HEK293 (cell line): ENCODE measurements at regions of chr22 and their contacts with region 1.

Region 1: GRCh38 chr22:22959147-22959827 is 71.7 kb downstream of the IGLL5 start:
- H3K4me3 ChIP-seq: no peak overlapping the region
- H3K27ac ChIP-seq: no peak overlapping the region
- H3K4me1 ChIP-seq: no peaks in the 10 kb centered on the region
- CTCF ChIP-seq: peak; percentile 98

Region 2: GRCh38 chr22:22463855-22464540 is 495.3 kb before region 1 on chr22:
- CTCF ChIA-PET with region 1: interaction called, 77 read pairs
- POLR2A ChIA-PET with region 1: no interaction called
- H3K4me3 ChIP-seq: no peak overlapping the region
- H3K27ac ChIP-seq: no peak overlapping the region
- H3K4me1 ChIP-seq: no peaks in the 10 kb centered on the region
- CTCF ChIP-seq: peak; percentile 77

Region 3: DNA sequence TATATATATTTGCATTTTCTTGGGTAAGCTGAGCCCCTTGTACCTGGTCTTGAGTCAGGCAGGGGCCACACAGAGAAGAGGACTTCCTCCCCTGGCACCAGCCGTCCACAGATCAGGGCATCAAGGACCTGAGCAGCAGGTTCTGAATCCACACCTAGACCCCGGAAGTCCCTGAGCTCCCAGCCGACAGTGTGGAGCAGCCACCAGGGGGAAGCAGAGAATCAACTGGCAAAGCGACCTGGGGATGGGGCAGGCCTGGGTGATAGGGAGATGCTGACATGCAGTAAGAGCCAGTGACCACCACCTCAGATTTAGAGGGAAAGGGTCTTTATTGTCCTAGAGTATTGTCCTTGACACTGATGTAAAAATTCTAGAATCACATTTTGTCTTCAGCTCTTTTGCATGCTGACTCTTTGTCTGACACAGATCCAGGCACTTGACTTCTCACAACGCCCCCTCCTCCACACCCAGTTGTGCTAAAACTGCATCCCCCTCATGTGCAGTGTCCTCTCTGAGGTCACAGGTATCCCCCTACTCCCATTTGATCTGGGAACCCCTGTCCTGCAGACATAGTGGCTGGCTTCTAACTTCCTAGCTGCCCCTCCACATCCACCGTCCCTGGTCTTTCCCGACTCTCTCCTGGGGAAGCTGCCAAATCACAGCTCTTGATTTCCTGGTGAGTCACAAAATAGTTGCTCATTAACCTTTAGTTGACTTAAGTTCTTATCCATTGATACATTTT is 205.6 kb before region 1 on chr22:
- CTCF ChIA-PET with region 1: interaction called, 18 read pairs
- POLR2A ChIA-PET with region 1: no interaction called
- H3K4me3 ChIP-seq: no peak overlapping the region
- H3K27ac ChIP-seq: no peak overlapping the region
- H3K4me1 ChIP-seq: no peaks in the 10 kb centered on the region
- CTCF ChIP-seq: peak; percentile 57; the same call in 1 of the 2 replicates

Region 4: GRCh38 chr22:22855617-22856308 is 103.5 kb before region 1 on chr22:
- CTCF ChIA-PET with region 1: interaction called, 76 read pairs
- POLR2A ChIA-PET with region 1: no interaction called
- H3K4me3 ChIP-seq: no peak overlapping the region
- H3K27ac ChIP-seq: no peak overlapping the region
- H3K4me1 ChIP-seq: no peaks in the 10 kb centered on the region
- CTCF ChIP-seq: peak; percentile 77

Region 5: DNA sequence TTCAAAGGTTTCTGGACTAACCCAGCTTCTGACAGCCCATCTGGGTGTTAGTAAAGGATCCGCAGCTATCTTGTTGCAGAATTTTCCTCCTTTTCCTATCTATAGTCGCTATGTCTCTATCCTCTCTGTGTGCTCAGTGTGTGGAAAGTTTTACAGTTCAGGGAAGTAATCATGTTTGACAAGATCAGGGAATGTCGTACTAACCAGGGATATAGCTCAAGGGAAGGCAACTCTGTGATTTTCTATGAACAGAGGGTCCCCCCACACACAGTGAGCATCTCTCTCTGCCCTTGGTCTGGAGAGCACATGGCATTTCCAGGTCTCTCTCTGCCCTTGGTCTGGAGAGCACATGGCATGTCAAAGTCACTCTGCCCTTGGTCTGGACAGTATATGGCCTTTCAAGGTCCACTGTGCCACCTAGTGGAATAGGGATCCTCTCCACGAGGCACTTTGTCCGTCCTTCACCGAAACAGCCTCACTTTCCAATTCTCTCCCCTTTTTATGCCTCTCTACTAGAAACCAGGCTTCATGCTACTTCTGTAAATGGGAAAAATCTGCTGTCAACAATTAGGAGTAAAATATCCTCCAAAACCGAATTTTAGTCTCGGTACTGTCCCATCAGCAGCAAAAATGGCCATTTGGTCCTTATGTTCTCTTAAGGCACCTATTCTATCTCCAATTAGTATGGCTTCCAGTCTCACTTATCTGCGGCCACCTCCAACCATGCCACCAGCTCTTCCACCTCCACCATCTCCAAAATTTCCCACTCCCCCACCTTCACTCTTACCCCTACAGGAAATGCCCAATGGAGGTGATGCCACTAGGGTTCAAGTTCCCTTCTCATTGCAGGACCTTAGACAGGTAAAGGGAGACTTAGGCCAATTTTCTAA is 17.0 kb after region 1 on chr22:
- CTCF ChIA-PET with region 1: interaction called, 76 read pairs
- POLR2A ChIA-PET with region 1: interaction called, 3 read pairs
- H3K4me3 ChIP-seq: no peak overlapping the region
- H3K27ac ChIP-seq: no peak overlapping the region
- H3K4me1 ChIP-seq: no peaks in the 10 kb centered on the region
- CTCF ChIP-seq: no peak

Region 6: GRCh38 chr22:23110190-23110913 is 151.1 kb after region 1 on chr22:
- CTCF ChIA-PET with region 1: interaction called, 19 read pairs
- POLR2A ChIA-PET with region 1: no interaction called
- H3K4me3 ChIP-seq: no peak overlapping the region
- H3K27ac ChIP-seq: no peak overlapping the region
- H3K4me1 ChIP-seq: no peaks in the 10 kb centered on the region
- CTCF ChIP-seq: no peak

Region 7: GRCh38 chr22:23178512-23179254 is 219.4 kb after region 1 on chr22:
- CTCF ChIA-PET with region 1: interaction called, 26 read pairs
- POLR2A ChIA-PET with region 1: no interaction called
- H3K4me3 ChIP-seq: no peak overlapping the region
- H3K27ac ChIP-seq: no peak overlapping the region
- H3K4me1 ChIP-seq: no peaks in the 10 kb centered on the region
- CTCF ChIP-seq: peak; percentile 91